Panc1 (cell line): ENCODE measurements at regions of chr2 and their contacts with region 1.

Region 1: DNA sequence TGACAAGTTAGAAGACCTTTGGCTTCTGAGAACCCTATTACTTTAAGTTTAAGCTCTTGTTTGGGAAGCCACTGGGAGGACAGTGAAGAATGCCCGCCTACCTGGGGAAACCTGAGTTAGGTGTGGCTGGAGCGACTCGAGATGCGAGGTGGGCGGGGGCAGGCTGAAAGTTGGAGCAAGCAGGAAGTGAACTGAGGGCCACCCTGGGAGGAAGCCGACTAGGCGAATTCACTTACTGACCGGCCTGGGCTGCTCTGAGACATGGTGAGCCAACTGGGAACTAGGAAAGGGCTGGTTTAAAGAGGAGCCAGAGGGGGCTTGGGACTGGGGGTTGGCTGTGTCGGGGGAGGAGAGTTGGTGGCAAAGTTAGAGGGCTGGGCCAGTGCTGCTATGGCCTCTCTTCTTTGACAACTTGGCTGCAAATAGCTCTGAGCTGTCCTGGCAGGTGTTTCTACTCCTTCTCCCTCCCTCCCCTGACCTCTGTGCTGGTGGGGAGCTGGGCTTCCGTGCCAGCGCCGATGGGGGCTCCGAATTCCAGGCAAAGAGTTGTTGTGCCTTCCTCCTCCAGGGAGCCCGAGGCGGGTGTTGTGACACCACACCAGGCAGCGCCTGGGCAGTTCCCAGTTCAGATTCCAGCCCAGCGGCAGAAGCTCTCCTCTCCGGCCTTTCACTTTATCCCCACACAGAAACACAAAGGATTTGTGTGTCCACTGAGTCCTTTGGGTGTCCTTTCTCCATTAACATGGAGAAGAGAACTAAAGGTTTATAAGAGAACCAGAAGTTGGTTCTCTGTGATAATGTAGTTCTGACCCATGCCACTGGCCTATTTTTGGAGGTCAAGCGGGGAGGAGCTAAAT is at the start of gene VAMP8:
- DNase-seq: no peak
- ATAC-seq: peak; percentile 87
- H3K4me3 ChIP-seq: peak within 1 kb of the TSS; percentile 49 to 66
- H3K27ac ChIP-seq: peak within 1 kb of the TSS; percentile 89
- H3K4me1 ChIP-seq: peaks cover 27% of the 10 kb centered on the region
- H3K27me3 ChIP-seq: no peaks in the 10 kb centered on the region
- CTCF ChIP-seq: no peak
- total RNA-seq, gene VAMP8: 93.2 TPM

Region 2: GRCh38 chr2:85156153-85156552 is 421.5 kb before region 1 on chr2:
- CTCF ChIA-PET with region 1: no interaction called
- POLR2A ChIA-PET with region 1: interaction called, 25 read pairs
- in situ Hi-C with region 1: no loop called
- intact Hi-C with region 1: no loop called
- DNase-seq: no peak
- ATAC-seq: no peak
- H3K4me3 ChIP-seq: no peak overlapping the region
- H3K27ac ChIP-seq: no peak overlapping the region
- H3K4me1 ChIP-seq: peaks cover 25% of the 10 kb centered on the region; the same call in 1 of the 2 replicates
- H3K27me3 ChIP-seq: no peaks in the 10 kb centered on the region
- CTCF ChIP-seq: no peak

Region 3: DNA sequence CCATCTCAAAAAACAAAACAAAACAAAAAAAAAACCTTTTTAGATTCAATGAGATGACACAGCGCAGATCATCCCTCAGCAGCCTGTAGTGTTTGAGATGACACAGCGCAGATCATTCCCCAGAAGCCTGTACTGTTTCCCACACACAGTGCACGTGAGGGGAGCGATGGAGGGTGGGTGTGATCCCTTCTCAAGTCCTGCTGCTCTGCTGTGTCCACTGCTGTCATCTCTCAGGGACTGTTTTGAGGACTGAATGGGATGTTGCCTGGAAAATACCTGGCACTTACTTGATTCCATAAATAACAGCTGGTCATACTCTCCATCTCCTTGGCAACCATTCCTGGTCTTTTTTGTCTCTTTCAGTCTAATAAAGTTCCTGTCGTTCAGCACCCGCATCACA is 275.5 kb before region 1 on chr2:
- CTCF ChIA-PET with region 1: no interaction called
- POLR2A ChIA-PET with region 1: interaction called, 12 read pairs
- in situ Hi-C with region 1: no loop called
- intact Hi-C with region 1: no loop called
- DNase-seq: no peak
- ATAC-seq: no peak
- H3K4me3 ChIP-seq: no peak overlapping the region
- H3K27ac ChIP-seq: no peak overlapping the region
- H3K4me1 ChIP-seq: peaks cover 4% of the 10 kb centered on the region
- H3K27me3 ChIP-seq: no peaks in the 10 kb centered on the region
- CTCF ChIP-seq: no peak

Region 4: DNA sequence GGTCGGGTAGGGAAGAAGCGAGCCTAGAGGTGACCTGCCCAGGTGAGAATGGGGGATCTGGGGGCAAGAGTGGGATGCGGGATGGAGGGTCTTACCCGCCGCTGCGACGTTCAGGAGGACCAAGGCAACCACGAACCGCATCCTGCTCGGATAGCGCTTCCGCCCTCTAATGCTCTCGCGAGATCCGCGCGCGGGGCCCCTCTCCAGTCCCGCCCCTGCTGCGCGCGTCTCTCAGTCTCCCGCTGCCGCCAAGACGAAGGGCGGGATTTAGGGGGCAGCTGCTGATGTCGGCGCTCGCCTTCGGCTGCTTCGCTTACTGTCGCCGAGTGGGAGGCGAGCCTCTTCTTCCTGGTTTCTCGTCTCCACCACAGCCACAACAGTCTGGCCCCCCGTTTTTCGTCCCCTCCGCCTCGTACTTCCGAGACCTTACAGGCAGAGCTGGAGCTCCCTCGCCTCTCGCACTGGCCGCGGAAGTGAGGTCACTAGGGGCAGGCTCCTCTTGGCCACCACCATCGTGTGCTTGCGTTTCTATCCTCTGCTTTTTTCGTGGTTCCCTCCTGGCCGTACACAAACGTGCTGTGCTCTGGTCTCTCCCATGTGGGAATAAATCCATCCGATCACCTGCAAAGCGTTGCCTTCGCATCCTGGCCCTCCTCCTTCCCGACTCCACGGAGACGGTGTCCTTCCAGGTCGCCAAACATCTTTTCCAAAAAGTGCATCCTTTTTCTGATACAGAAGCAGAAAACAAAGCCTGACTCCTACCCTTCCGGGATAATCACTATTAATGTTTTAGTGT is 249.6 kb before region 1 on chr2 and contains the start of gene TGOLN2:
- CTCF ChIA-PET with region 1: no interaction called
- POLR2A ChIA-PET with region 1: no interaction called
- in situ Hi-C with region 1: no loop called
- intact Hi-C with region 1: no loop called
- DNase-seq: peak; percentile 79
- ATAC-seq: peak; percentile 99
- H3K4me3 ChIP-seq: peak within 1 kb of the TSS; percentile 83 to 88
- H3K27ac ChIP-seq: peak within 1 kb of the TSS; percentile 93
- H3K4me1 ChIP-seq: peaks cover 12% of the 10 kb centered on the region
- H3K27me3 ChIP-seq: no peaks in the 10 kb centered on the region
- CTCF ChIP-seq: no peak
- total RNA-seq, gene TGOLN2: 178 TPM

Region 5: GRCh38 chr2:85878719-85879385 is 301.2 kb after region 1 on chr2:
- CTCF ChIA-PET with region 1: no interaction called
- POLR2A ChIA-PET with region 1: no interaction called
- in situ Hi-C with region 1: no loop called
- intact Hi-C with region 1: no loop called
- DNase-seq: no peak
- ATAC-seq: no peak; the same call in 1 of the 2 replicates
- H3K4me3 ChIP-seq: no peak overlapping the region
- H3K27ac ChIP-seq: no peak overlapping the region
- H3K4me1 ChIP-seq: no peaks in the 10 kb centered on the region
- H3K27me3 ChIP-seq: peaks cover 3% of the 10 kb centered on the region; the same call in 1 of the 2 replicates
- CTCF ChIP-seq: no peak